ENCODE measurements at regions of chr2 and their contacts with region 1.

Region 1: GRCh38 chr2:174634130-174635014 is 36.8 kb upstream of the WIPF1 start:
- DNase-seq: peak; percentile 74
- ATAC-seq: peak; percentile 81
- H3K4me3 Mint-ChIP-seq: peak overlapping the region; percentile 85
- H3K27ac Mint-ChIP-seq: peak overlapping the region; percentile 93
- H3K4me1 Mint-ChIP-seq: peaks cover 73% of the 10 kb centered on the region
- H3K27me3 Mint-ChIP-seq: no peaks in the 10 kb centered on the region

Region 2: GRCh38 chr2:174593574-174594203 is 40.7 kb before region 1 on chr2:
- CTCF ChIA-PET with region 1: interaction called, 32 read pairs
- POLR2A ChIA-PET with region 1: interaction called, 186 read pairs
- DNase-seq: peak; percentile 89
- ATAC-seq: peak; percentile 73
- H3K4me3 Mint-ChIP-seq: peak overlapping the region; percentile 80
- H3K27ac Mint-ChIP-seq: peak overlapping the region; percentile 97
- H3K4me1 Mint-ChIP-seq: peaks cover 47% of the 10 kb centered on the region
- H3K27me3 Mint-ChIP-seq: no peaks in the 10 kb centered on the region

Region 3: GRCh38 chr2:174615871-174616436 is 18.4 kb before region 1 on chr2:
- CTCF ChIA-PET with region 1: interaction called, 12 read pairs
- POLR2A ChIA-PET with region 1: interaction called, 40 read pairs
- DNase-seq: no peak
- ATAC-seq: peak; percentile 45
- H3K4me3 Mint-ChIP-seq: peak overlapping the region; percentile 19
- H3K27ac Mint-ChIP-seq: peak overlapping the region; percentile 82
- H3K4me1 Mint-ChIP-seq: peaks cover 87% of the 10 kb centered on the region
- H3K27me3 Mint-ChIP-seq: no peaks in the 10 kb centered on the region

Region 4: GRCh38 chr2:174667379-174667781 is 33.0 kb after region 1 on chr2:
- CTCF ChIA-PET with region 1: interaction called, 11 read pairs
- POLR2A ChIA-PET with region 1: interaction called, 3 read pairs
- DNase-seq: no peak
- ATAC-seq: peak; percentile 76
- H3K4me3 Mint-ChIP-seq: no peak overlapping the region
- H3K27ac Mint-ChIP-seq: peak overlapping the region; percentile 26
- H3K4me1 Mint-ChIP-seq: peaks cover 16% of the 10 kb centered on the region
- H3K27me3 Mint-ChIP-seq: no peaks in the 10 kb centered on the region

Region 5: GRCh38 chr2:174688079-174688478 is 53.7 kb after region 1 on chr2:
- CTCF ChIA-PET with region 1: interaction called, 81 read pairs
- POLR2A ChIA-PET with region 1: interaction called, 55 read pairs
- DNase-seq: no peak
- ATAC-seq: peak; percentile 68
- H3K4me3 Mint-ChIP-seq: no peak overlapping the region
- H3K27ac Mint-ChIP-seq: no peak overlapping the region
- H3K4me1 Mint-ChIP-seq: peaks cover 44% of the 10 kb centered on the region
- H3K27me3 Mint-ChIP-seq: no peaks in the 10 kb centered on the region

Region 6: DNA sequence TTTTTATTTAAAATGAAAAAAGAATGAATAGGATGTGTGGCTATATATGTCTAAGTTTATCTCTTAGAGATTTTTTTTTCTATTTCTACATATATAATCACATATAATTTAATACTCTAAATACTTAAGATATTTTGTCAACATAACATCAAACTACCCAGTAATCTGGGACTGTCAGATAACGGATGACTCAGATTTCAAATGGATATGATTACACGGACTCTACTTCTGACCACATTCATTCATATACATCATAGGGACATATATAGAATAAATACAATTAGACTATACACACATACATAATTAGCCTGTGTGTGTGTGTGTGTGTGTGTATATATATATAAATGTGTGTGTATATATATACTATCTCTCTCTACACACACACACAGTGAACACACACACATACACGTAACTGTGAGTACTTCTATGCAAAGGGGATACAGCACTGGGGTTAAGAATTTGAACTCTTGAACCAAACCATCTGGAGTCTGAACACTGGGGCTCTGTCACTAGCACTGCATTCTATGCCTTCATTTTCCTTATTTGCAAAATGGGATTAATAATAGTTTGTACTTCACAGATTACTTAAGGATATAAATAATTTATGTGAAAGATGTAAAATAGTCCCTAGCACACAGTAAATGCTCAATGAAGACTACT is 311.4 kb after region 1 on chr2:
- CTCF ChIA-PET with region 1: no interaction called
- POLR2A ChIA-PET with region 1: no interaction called
- DNase-seq: no peak
- ATAC-seq: no peak
- H3K4me3 Mint-ChIP-seq: no peak overlapping the region
- H3K27ac Mint-ChIP-seq: no peak overlapping the region
- H3K4me1 Mint-ChIP-seq: no peaks in the 10 kb centered on the region
- H3K27me3 Mint-ChIP-seq: peaks cover 1% of the 10 kb centered on the region

Measured in activated CD8-positive, alpha-beta T cell treated with anti-CD3 and anti-CD28 coated beads, Interleukin-2, amount 10 ng/mL, durations not matched to agents 7 days and 5 days (primary cell).